ENCODE measurements at regions of chr10 and their contacts with region 1.

Region 1: GRCh38 chr10:110076559-110077318 is 69.0 kb downstream of the ADD3 start:
- DNase-seq: no peak
- H3K4me3 Mint-ChIP-seq: peak overlapping the region; percentile 81
- H3K27ac Mint-ChIP-seq: peak overlapping the region; percentile 98
- H3K4me1 Mint-ChIP-seq: peaks cover 84% of the 10 kb centered on the region
- H3K27me3 Mint-ChIP-seq: no peaks in the 10 kb centered on the region

Region 2: DNA sequence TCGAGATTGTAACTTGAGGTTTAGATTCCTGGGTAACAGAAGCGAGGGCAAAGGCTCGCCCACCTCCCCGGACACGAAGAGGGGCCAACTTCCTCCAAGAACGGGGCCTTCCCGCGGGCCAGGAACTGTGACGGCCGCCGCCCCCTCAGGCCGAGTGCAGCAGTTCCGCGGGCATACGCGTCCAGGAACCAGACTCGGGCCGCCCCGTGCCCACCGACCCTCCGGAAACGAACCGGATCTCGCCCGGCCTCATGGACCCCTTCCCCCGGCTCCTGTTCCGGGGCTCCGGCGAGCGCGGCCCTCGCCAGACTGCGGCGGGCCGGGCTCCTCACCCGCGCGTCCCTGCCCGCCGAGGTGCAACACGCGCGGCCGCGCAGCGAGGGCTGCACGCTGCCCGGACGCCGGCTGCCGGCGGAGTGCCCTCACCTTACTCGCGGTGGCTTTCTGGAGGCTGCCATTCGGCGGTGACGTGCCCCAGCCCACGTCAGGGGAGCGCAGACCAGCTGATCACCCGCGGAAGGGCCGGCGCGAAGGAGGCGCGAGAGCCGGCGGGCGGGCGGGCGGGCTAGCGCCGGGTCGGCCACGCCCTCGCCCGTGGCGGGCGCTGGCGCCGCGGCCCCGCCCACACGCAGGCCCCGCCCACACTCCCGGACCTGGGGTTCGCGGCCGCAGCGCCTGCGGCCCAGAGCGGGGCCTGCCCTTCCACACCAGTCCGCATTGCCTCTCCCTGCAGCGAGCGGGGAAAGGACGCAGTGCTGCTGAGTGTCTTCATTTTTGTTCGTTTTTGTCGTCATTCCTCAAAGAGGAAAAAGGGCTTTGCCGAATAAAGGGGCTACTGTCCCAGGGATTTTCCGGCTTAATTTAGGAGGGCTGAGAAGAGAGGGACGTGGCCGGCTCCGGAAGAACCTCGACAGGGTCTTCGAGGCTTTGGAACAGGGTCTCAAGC is 153.5 kb before region 1 on chr10 and contains the start of gene XPNPEP1:
- CTCF ChIA-PET with region 1: no interaction called
- POLR2A ChIA-PET with region 1: no interaction called
- intact Hi-C with region 1: loop called (anchors 5 kb)
- DNase-seq: peak; percentile 90
- H3K4me3 Mint-ChIP-seq: peak within 1 kb of the TSS; percentile 90
- H3K27ac Mint-ChIP-seq: peak within 1 kb of the TSS; percentile 93
- H3K4me1 Mint-ChIP-seq: peaks cover 56% of the 10 kb centered on the region
- H3K27me3 Mint-ChIP-seq: no peaks in the 10 kb centered on the region
- total RNA-seq, gene XPNPEP1: 66.4 to 66.6 TPM

Region 3: DNA sequence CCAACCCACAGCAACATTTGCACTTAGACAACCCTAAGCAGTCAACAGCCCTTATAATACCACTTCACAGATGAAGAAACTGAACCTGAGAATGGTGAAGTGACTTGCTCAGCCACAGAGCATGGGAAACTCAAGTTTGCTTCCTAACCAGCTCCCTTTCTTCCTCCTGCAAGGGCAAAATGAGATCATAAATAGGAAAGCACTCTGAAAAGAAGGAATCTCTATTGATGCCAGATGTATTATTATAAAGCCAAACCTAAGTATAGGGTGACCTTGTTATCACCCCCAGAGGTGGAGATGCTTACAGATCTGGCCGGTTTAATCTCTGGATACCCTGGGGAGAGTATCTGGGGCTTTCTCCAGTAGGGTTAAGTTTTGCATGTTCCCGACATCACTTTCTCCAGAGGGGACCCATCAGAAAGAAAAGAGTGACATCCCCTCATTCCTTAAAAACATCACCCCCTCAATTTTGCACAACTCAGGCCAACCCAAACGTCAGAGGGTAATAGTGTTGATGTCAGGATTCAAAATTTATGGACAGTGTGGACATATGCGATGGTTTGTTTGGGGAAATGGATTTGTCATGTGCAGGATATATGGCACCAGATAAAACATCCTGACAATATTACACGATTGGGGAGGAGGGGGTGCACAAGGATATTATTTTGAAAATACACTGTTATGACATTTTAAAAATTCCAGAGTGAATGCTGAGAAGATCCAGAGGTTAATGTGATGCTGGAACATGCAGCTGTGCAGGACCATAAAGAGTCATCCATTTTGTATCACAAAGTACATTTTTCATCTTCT is 129.4 kb before region 1 on chr10:
- CTCF ChIA-PET with region 1: no interaction called
- POLR2A ChIA-PET with region 1: no interaction called
- intact Hi-C with region 1: no loop called
- DNase-seq: no peak
- H3K4me3 Mint-ChIP-seq: no peak overlapping the region
- H3K27ac Mint-ChIP-seq: no peak overlapping the region
- H3K4me1 Mint-ChIP-seq: peaks cover 3% of the 10 kb centered on the region
- H3K27me3 Mint-ChIP-seq: no peaks in the 10 kb centered on the region

Region 4: DNA sequence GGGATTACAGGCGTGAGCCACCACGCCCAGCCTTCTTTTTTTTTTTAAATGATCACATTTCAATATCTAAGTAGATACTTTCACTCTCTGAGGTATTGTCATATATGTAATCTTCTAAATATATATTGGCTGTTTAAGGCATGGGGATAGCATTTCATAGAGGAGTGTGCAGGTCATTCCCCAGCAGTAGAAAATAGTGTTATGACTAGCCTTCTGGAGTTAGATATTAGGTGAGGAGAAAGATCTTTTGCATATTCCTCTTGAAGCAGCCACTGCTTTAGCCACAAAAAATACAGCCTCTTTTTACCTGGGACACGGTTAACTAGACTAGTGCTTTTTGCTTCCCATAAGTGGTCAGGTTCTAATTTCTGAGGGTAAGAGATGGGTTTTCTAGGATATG is 40.1 kb before region 1 on chr10:
- CTCF ChIA-PET with region 1: interaction called, 5 read pairs
- POLR2A ChIA-PET with region 1: no interaction called
- intact Hi-C with region 1: loop called (anchors 2 kb)
- DNase-seq: no peak
- H3K4me3 Mint-ChIP-seq: no peak overlapping the region
- H3K27ac Mint-ChIP-seq: peak overlapping the region; percentile 54
- H3K4me1 Mint-ChIP-seq: peaks cover 83% of the 10 kb centered on the region
- H3K27me3 Mint-ChIP-seq: no peaks in the 10 kb centered on the region

Region 5: DNA sequence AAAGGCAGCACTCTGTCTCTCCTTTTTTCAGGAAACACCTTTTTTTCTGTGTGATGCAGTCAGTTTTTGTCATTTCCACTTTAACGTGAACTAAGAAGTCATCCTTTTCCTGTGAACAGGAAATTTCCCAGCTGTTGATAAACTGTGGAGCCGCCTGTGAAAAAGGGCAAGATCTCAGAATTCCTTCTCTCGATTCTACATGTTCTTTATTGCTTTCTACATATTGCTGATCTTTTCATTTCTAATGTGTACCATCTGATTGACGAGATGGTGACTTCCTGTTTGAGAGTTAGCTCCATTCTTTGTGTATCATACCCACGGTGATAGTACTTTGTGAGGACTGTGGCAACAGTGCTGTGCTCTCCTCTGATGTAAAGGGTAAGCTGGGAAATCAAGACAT is 18.5 kb before region 1 on chr10:
- CTCF ChIA-PET with region 1: interaction called, 5 read pairs
- POLR2A ChIA-PET with region 1: interaction called, 13 read pairs
- intact Hi-C with region 1: loop called (anchors 1 kb)
- DNase-seq: no peak
- H3K4me3 Mint-ChIP-seq: peak overlapping the region; percentile 68
- H3K27ac Mint-ChIP-seq: peak overlapping the region; percentile 83
- H3K4me1 Mint-ChIP-seq: peaks cover 83% of the 10 kb centered on the region
- H3K27me3 Mint-ChIP-seq: no peaks in the 10 kb centered on the region

Region 6: GRCh38 chr10:110129490-110129889 is 52.8 kb after region 1 on chr10:
- CTCF ChIA-PET with region 1: no interaction called
- POLR2A ChIA-PET with region 1: no interaction called
- intact Hi-C with region 1: no loop called
- DNase-seq: no peak
- H3K4me3 Mint-ChIP-seq: no peak overlapping the region
- H3K27ac Mint-ChIP-seq: peak overlapping the region; percentile 1
- H3K4me1 Mint-ChIP-seq: peaks cover 3% of the 10 kb centered on the region
- H3K27me3 Mint-ChIP-seq: no peaks in the 10 kb centered on the region

Region 7: DNA sequence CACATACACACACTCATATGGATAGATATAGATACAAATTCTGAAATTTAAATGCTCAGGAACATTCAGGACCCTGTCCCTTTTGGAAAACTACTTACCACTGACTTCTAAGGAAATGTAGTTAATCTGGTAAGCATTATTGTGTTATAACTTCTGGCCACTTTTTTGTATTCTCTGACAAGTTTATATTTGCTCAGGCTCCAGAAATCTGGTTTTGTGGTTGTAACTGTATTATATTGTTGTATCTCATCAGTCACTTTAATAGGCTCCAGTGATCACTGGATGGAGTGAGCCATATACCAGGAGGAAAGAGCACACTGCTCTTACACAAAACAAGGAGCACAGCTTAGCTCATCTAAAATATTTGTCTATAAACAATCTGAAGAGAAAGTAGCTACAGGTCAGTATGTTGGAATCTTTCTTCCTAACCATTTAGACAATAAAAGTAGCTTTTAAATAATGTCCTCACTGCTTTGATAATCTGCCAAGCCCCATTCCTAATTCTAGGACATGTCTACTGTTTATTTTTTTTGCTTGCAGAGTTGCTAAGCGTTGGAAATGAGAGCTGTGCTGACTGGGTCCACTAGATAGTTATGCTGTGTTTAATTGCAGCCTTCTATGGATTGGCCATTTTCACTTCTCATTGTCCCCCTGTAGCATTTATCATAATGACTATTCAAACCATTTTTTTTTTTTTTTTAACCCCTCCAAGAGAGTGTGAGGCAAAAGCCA is 184.2 kb after region 1 on chr10:
- CTCF ChIA-PET with region 1: no interaction called
- POLR2A ChIA-PET with region 1: no interaction called
- intact Hi-C with region 1: no loop called
- DNase-seq: no peak
- H3K4me3 Mint-ChIP-seq: no peak overlapping the region
- H3K27ac Mint-ChIP-seq: no peak overlapping the region
- H3K4me1 Mint-ChIP-seq: no peaks in the 10 kb centered on the region
- H3K27me3 Mint-ChIP-seq: no peaks in the 10 kb centered on the region

Measured in activated CD4-positive, alpha-beta memory T cell treated with anti-CD3 and anti-CD28 coated beads for 36 hours (primary cell).